ENCODE measurements at regions of chrX and their contacts with region 1.

Region 1: DNA sequence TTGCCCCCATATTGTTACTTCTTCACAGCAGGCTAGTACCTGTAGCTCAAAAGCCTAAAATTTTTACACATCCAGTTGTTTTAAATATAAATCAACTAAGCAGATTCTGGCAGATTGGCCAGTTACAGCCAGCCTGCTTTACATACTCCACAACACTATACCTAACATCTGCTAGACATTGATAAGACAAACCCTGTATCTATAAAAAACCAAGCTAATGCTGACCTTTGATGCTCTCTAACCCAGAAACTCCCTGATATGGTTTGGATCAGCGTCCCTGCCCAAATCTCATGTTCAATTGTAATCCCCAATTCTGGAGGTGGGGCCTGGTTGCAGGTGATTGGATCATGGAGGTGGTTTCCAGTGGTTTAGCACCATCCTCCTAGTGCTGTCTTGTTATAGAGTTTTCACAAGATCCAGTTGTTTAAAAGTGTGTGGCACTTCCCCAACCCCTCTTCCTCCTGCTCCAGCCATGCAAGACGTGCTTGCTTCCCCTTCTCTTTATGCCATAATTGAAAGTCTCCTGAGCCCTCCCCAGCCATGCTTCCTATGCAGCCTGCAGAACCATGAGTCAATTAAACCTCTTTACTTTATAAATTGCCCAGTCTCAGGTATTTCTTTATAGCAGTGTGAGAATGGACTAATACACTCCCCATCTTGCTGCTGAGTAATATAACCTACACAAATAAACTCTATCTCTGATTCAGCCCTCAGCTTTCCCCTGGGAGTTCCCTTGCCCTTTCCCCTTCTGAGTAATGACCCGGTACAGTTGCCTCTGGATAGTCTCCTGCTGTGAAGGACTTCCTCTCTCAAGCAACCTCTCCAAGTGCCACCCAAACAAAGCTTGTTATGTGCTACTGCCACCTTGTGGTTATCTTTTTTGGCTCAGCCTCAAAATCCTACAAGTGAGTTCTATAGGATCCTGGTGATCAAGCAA is 39.6 kb downstream of the ZCCHC13 start:
- DNase-seq: peak in 1 of 2 donors; percentile 51
- ATAC-seq: peak; percentile 74
- H3K4me3 ChIP-seq: no peak overlapping the region
- H3K27ac ChIP-seq: no peak overlapping the region
- H3K4me1 ChIP-seq: no peaks in the 10 kb centered on the region
- H3K27me3 ChIP-seq: no peaks in the 10 kb centered on the region

Region 2: GRCh38 chrX:74133156-74133796 is 210.3 kb before region 1 on chrX:
- intact Hi-C with region 1: loop called in 1 of 2 experiments (anchors 10 kb)
- DNase-seq: no peak
- ATAC-seq: peak; percentile 87
- H3K4me3 ChIP-seq: no peak overlapping the region
- H3K27ac ChIP-seq: peak overlapping the region in 1 of 2 donors; percentile 25
- H3K4me1 ChIP-seq: no peaks in the 10 kb centered on the region
- H3K27me3 ChIP-seq: no peaks in the 10 kb centered on the region

Measured in aorta (tissue), 5 donors.